SK-N-SH (cell line): ENCODE measurements at regions of chr13 and their contacts with region 1.

Region 1: GRCh38 chr13:59906413-59907049 is 257.2 kb downstream of the DIAPH3 start:
- DNase-seq: peak; percentile 27
- H3K4me3 ChIP-seq: no peak overlapping the region
- H3K27ac ChIP-seq: peak overlapping the region in 1 of 2 experiments; percentile 23; a peak in 1 of 4 replicates
- H3K4me1 ChIP-seq: peaks cover 0 to 15% of the 10 kb centered on the region in 2 experiments; a peak in 2 of 4 replicates
- H3K27me3 ChIP-seq: no peaks in the 10 kb centered on the region
- CTCF ChIP-seq: peak; percentile 82
- EP300 ChIP-seq: no peak
- RAD21 ChIP-seq: peak; percentile 91

Region 2: GRCh38 chr13:59690857-59691500 is 215.6 kb before region 1 on chr13:
- CTCF ChIA-PET with region 1: interaction called, 23 read pairs
- POLR2A ChIA-PET with region 1: no interaction called
- DNase-seq: no peak
- H3K4me3 ChIP-seq: no peak overlapping the region
- H3K27ac ChIP-seq: no peak overlapping the region
- H3K4me1 ChIP-seq: peaks cover 11 to 18% of the 10 kb centered on the region in 2 experiments; a peak in 3 of 4 replicates
- H3K27me3 ChIP-seq: no peaks in the 10 kb centered on the region
- CTCF ChIP-seq: no peak
- EP300 ChIP-seq: no peak
- RAD21 ChIP-seq: no peak